WTC11 (cell line): ENCODE measurements at regions of chr1 and their contacts with region 1.

Region 1: DNA sequence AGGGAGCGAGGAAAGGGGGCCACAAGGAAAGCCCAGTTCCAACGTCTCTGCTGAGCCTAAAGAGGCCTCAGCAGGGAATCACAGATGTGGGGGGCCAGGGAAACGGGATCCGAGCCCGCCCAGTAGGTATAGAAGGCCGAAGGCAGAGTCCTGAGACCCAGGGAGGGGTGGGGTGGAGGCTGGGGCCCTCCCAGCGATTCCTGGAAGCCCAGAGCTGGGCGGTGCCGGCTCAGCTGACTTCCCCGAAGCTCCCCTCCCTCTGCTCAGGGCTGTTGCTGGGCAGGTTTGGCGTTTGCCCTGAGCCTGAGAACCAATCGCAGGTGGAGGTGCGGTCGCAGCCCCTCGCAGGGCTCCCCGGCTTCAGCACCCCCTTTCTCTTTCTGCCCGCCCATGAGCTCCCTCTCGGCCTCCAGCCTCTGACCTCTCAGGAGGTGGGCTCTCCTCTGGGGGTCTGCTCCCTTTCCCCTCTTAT is 12.8 kb downstream of the ADAMTSL4 start:
- DNase-seq: peak; percentile 92
- ATAC-seq: peak; percentile 54
- H3K4me3 Mint-ChIP-seq: peak overlapping the region; percentile 92
- H3K27ac Mint-ChIP-seq: peak overlapping the region; percentile 98
- H3K4me1 Mint-ChIP-seq: peaks cover 52% of the 10 kb centered on the region
- H3K27me3 Mint-ChIP-seq: no peaks in the 10 kb centered on the region
- CTCF ChIP-seq: no peak

Region 2: GRCh38 chr1:150309770-150310508 is 252.1 kb before region 1 on chr1:
- CTCF ChIA-PET with region 1: no interaction called
- POLR2A ChIA-PET with region 1: no interaction called
- DNase-seq: no peak
- ATAC-seq: no peak
- H3K4me3 Mint-ChIP-seq: no peak overlapping the region
- H3K27ac Mint-ChIP-seq: peak overlapping the region; percentile 79; the same call in 1 of the 2 replicates
- H3K4me1 Mint-ChIP-seq: peaks cover 9% of the 10 kb centered on the region
- H3K27me3 Mint-ChIP-seq: no peaks in the 10 kb centered on the region
- CTCF ChIP-seq: no peak

Region 3: DNA sequence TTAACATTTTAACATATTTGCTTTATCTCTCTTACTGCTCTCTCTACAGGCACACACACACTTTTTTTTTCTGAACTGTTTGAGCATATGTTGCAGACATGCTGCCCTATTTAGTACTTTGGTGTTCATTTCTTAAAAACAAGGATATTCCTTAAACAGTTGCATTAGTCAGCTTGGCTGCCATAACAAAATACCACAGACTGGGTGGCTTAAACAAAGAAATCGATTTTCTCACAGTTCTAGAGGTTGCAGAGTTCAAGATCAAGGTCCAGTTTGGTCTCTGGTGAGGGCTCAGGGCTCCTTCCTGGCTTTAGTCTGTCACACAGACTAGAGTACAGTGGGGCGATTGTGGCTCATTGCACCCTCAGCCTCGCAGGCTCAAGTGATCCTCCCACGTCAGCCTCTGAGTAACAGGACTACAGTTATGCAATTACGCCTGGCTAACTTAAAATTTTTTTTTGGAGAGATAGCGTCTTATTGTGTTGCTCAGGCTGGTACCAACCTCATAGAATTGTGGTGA is 151.4 kb before region 1 on chr1:
- CTCF ChIA-PET with region 1: no interaction called
- POLR2A ChIA-PET with region 1: no interaction called
- DNase-seq: no peak
- ATAC-seq: no peak
- H3K4me3 Mint-ChIP-seq: no peak overlapping the region
- H3K27ac Mint-ChIP-seq: peak overlapping the region; percentile 51
- H3K4me1 Mint-ChIP-seq: peaks cover 40% of the 10 kb centered on the region
- H3K27me3 Mint-ChIP-seq: no peaks in the 10 kb centered on the region
- CTCF ChIP-seq: no peak

Region 4: GRCh38 chr1:150537732-150538684 is 24.0 kb before region 1 on chr1:
- CTCF ChIA-PET with region 1: interaction called, 144 read pairs
- POLR2A ChIA-PET with region 1: interaction called, 7 read pairs
- DNase-seq: peak; percentile 76
- ATAC-seq: peak; percentile 85
- H3K4me3 Mint-ChIP-seq: no peak overlapping the region
- H3K27ac Mint-ChIP-seq: peak overlapping the region; percentile 90
- H3K4me1 Mint-ChIP-seq: peaks cover 17% of the 10 kb centered on the region
- H3K27me3 Mint-ChIP-seq: no peaks in the 10 kb centered on the region
- CTCF ChIP-seq: no peak

Region 5: DNA sequence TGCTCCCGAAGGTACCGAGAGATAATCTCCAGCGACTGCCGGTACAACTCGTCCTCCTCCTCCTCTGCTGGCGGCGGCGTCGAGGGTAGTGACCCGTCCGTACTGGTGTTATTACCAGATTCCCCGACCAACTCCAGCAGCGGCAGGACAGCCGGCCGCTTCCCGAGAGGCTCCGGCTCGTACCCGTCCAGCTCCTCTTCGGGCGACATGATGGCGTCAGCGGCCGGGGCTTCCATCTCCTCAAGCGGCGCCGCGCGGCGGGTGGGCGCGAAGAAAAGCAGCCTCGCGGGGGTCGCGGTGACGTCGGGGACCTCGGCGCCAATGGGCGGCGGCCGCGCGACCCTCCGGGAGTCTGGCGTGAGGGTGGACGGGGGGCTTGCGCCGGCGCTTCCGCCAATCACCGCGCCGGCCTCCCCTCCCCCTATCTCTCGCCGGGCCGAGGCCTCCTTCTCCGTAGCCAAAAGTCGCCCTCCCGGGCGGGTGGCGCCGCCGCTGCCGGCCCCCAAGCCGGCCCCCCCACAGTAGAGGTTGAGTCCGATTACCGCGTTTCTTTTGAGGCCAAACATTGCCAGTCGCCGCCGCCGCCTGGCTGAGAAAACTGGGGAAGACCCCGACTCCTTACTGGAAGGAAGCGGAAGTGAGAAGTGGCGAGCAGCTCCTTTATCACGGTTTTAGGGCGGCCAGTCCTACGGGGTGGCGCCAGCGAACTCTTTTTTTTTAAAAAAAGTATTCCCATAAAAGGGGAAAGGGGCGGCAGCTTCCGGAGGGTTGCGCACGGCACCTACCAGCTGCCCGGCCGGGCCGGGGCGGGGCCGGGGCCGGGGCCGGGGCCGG is 17.2 kb after region 1 on chr1 and contains the start of gene MCL1:
- CTCF ChIA-PET with region 1: interaction called, 68 read pairs
- POLR2A ChIA-PET with region 1: interaction called, 188 read pairs
- DNase-seq: peak; percentile 89
- ATAC-seq: peak; percentile 88
- H3K4me3 Mint-ChIP-seq: peak within 1 kb of the TSS; percentile 92
- H3K27ac Mint-ChIP-seq: peak within 1 kb of the TSS; percentile 100
- H3K4me1 Mint-ChIP-seq: peaks cover 41% of the 10 kb centered on the region
- H3K27me3 Mint-ChIP-seq: no peaks in the 10 kb centered on the region; the same call in 1 of the 2 replicates
- CTCF ChIP-seq: no peak
- total RNA-seq, gene MCL1: 191 to 212 TPM (median 204 TPM) in 3 replicates

Region 6: GRCh38 chr1:150621497-150622302 is 59.7 kb after region 1 on chr1:
- CTCF ChIA-PET with region 1: interaction called, 53 read pairs
- POLR2A ChIA-PET with region 1: interaction called, 6 read pairs
- DNase-seq: peak; percentile 37
- ATAC-seq: no peak
- H3K4me3 Mint-ChIP-seq: no peak overlapping the region
- H3K27ac Mint-ChIP-seq: peak overlapping the region; percentile 93
- H3K4me1 Mint-ChIP-seq: peaks cover 46% of the 10 kb centered on the region
- H3K27me3 Mint-ChIP-seq: no peaks in the 10 kb centered on the region
- CTCF ChIP-seq: peak; percentile 28; the same call in 1 of the 2 replicates

Region 7: DNA sequence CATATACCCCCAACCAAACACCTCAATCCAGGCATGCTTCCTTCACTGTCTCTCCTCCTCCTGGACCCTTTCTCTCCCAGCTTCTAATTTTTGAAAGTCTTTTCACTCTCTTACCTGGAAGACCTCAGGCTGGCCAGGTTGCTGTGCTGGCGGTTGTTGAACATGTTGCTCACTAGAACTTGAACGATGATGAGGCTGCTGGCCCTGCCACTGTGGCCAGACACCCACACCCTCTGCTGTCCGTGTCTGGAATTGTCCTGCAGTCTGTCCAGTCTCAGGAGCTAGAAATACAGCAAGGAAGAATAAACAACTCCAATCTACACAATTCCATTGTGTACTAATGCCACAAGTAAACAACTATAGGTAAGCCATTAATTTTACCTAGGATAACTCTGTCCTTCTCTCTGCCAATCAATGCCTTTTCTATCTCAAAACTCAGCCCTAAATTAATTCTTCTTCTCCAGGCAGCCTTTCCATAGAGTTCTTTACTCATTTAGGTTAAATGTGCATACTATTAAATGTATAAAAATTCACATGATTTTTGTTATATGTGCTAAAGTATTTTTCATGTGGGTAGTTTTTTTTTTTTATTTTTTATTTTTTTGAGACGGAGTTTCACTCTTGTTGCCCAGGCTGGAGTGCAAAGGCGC is 251.2 kb after region 1 on chr1:
- CTCF ChIA-PET with region 1: interaction called, 16 read pairs
- POLR2A ChIA-PET with region 1: interaction called, 4 read pairs
- DNase-seq: peak; percentile 63
- ATAC-seq: peak; percentile 84
- H3K4me3 Mint-ChIP-seq: no peak overlapping the region
- H3K27ac Mint-ChIP-seq: no peak overlapping the region
- H3K4me1 Mint-ChIP-seq: peaks cover 7% of the 10 kb centered on the region
- H3K27me3 Mint-ChIP-seq: no peaks in the 10 kb centered on the region
- CTCF ChIP-seq: peak; percentile 48